ENCODE measurements at regions of chr3 and their contacts with region 1.

Region 1: GRCh38 chr3:70137366-70137765 is 137.8 kb downstream of the SAMMSON start:
- DNase-seq: no peak
- H3K4me3 ChIP-seq: no peak overlapping the region
- H3K27ac ChIP-seq: no peak overlapping the region
- H3K4me1 ChIP-seq: no peaks in the 10 kb centered on the region
- H3K27me3 ChIP-seq: no peaks in the 10 kb centered on the region
- CTCF ChIP-seq: no peak
- EP300 ChIP-seq: no peak
- RAD21 ChIP-seq: no peak

Region 2: DNA sequence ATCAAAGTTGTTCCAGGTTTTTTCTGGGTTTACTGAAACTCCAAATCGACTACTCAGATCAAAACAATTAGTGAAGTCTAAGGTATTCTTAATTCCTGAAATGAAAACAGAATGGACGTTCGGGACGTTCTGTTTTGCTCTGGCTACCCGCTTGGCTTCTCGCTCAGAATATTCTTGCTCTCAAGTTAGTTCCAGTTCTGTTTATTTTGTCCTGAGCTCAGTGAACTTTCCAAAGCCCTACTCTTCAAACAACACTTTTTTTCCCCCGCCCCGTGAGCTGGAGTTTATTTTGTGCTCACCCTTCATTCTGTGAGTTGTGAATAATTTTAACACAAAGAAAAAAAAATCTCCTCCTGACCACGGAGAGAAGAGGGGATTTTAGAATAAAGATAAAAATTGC is 65.2 kb before region 1 on chr3:
- CTCF ChIA-PET with region 1: no interaction called
- POLR2A ChIA-PET with region 1: no interaction called
- DNase-seq: no peak
- H3K4me3 ChIP-seq: no peak overlapping the region
- H3K27ac ChIP-seq: no peak overlapping the region
- H3K4me1 ChIP-seq: no peaks in the 10 kb centered on the region
- H3K27me3 ChIP-seq: no peaks in the 10 kb centered on the region
- CTCF ChIP-seq: no peak
- EP300 ChIP-seq: no peak
- RAD21 ChIP-seq: no peak

Region 3: DNA sequence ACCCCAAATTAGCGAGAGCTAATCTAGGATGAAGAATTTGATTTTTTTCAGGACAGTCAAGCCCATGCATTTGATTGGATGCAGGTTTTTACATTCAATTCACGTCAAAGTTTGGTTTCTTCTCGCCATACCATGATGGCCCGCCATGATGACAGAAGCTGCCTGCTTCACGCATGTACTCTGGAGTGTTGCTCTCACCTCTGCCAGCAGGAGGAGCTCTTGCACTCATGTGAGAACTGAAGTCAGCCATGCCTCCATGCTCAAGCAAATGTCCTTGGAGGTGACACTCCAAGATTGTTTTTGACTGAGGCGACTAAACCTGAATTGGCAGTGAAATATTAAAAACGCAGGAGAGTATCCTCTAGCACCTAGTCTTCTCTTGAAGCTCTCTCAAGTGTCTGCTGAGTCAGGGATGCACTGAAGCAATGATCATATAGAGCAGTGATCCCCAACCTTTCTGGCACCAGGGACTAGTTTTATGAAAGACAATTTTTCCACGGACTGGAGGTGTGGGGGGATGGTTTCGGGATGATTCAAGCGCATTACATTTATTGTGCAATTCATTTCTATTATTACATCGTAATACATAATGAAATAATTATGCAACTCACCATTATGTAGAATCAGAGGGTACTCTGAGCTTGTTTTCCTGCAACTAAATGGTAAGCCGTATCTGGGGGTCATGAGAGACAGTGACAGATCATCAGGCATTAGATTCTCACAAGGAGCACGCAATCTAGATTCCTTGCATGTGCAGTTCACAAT is 16.8 kb before region 1 on chr3:
- CTCF ChIA-PET with region 1: interaction called, 13 read pairs
- POLR2A ChIA-PET with region 1: no interaction called
- DNase-seq: peak; percentile 29
- H3K4me3 ChIP-seq: no peak overlapping the region
- H3K27ac ChIP-seq: no peak overlapping the region
- H3K4me1 ChIP-seq: no peaks in the 10 kb centered on the region
- H3K27me3 ChIP-seq: no peaks in the 10 kb centered on the region
- CTCF ChIP-seq: peak; percentile 75
- EP300 ChIP-seq: no peak
- RAD21 ChIP-seq: peak; percentile 67

Region 4: DNA sequence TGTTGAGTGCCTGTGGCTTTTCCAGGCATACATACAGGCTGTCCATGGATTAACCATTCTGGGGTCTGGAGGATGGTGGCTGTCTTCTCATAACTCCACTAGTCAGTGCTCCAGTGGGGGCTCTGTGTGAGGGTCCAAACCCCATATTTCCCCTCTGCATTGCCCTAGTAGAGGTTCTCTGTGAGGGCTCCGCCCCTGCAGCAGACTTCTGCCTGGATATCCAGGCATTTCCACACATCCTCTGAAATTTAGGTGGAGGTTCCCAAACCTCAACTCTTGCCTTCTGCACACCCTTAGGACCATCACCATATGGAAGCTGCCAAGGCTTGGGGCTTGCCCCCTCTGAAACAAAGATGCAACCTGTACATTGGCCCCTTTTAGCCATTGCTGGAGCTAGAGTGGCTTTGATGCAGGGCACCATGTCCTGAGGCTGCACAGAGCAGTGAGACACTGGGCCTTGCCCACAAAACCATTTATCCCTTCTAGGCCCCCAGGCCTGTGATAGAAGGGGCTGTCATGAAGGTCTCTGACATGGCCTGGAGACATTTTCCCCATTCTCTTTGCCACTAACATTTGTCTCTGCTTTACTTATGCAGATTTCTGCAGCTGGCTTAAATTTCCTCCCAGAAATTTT is 575.2 kb after region 1 on chr3:
- CTCF ChIA-PET with region 1: no interaction called
- POLR2A ChIA-PET with region 1: no interaction called
- DNase-seq: no peak
- H3K4me3 ChIP-seq: no peak overlapping the region; a peak in 1 of 4 replicates
- H3K27ac ChIP-seq: no peak overlapping the region
- H3K4me1 ChIP-seq: no peaks in the 10 kb centered on the region
- H3K27me3 ChIP-seq: no peaks in the 10 kb centered on the region
- CTCF ChIP-seq: no peak
- EP300 ChIP-seq: no peak
- RAD21 ChIP-seq: no peak